AG04449 (cell line): ENCODE measurements at regions of chr13 and their contacts with region 1.

Region 1: DNA sequence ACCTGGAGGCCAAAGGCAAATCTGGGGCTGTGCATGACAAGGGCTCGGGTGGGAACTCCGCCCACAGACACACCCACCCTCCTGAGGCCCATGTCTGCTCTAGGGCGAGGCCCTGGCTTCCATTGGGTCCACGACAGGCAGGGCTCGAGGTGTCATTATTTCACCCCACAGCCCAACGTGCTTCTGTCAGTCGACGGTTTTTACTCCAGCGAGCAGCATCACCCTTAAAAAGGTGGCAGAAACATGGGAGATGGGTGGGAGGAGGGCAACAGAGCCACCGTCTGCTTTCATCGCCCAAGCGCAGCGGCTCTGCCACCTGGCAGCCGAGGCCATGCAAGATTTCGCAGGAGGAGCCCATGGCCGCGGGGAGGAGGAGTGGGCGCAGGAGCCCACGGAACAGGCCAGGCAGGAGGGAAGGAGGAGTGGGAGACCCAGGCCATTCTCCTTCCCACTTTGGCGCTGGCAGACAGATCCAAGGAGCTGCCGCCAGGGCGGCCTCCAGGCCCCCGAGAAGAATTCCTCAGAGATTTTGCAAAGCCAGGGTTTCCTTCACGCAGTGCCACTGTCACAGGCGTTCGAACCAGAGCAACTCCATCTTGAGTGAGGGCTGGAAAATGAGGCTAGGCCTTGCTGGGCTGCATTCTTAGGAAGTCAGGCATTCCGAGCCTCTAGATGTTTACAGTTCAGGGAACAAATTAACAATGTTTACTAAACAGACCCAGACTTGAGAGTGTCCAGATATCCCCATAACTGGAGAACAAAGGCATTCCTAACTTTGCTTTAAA is 49.3 kb upstream of the TUBGCP3 start:
- DNase-seq: no peak
- H3K4me3 ChIP-seq: no peak overlapping the region
- CTCF ChIP-seq: no peak

Region 2: GRCh38 chr13:112652512-112653070 is 15.4 kb after region 1 on chr13:
- CTCF ChIA-PET with region 1: interaction called, 15 read pairs
- POLR2A ChIA-PET with region 1: no interaction called
- DNase-seq: no peak
- H3K4me3 ChIP-seq: no peak overlapping the region
- CTCF ChIP-seq: no peak